ENCODE measurements at regions of chr1 and their contacts with region 1.

Region 1: DNA sequence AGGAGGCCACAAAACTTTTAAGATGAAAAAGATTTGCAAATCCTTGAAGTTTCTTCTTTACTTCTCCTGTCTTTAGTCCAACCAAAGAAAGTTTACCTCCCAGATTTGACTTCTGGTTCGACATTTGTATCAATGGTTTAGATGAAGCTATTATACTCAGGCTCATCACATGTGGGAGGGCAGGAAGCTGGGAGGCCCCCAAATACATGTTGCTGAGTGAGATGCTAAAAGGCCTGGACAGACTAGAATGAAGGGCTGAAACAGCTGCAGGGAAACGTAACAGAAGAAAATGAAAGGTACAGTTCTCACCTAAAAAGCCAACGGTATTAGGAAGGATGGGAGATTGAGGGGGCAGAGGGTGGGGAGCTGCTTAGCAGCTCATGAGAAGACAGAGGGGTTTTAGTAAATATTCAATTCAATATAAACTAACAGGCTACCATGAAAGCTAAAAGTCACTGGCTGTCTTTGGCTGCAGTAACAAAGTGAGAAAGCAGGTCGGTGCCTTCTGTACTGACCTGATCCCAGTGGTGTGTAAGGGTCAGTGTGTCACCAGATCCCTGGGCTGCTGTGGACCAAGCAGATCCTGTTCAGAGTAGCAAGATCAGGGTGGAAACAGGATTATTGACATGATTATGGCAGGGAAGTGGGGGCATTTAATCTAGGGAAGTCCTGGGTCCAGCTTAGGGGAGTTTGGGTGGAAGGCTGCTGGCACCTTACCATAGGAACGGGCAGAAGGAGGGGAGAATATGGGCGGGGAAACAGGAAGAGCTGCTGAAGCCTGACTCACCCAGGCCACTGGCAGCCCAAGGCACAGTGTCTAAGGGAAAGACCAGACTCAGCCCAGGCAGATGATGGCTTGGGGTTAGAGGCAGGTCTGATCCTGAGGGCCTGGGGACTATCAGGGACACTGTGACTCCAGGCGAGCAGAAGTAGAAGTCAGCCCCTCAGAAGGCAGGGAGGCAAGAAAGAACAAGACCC is 60.4 kb downstream of the KCNN3 start:
- DNase-seq: no peak
- ATAC-seq: peak; percentile 21
- H3K4me3 ChIP-seq: no peak overlapping the region
- H3K27ac ChIP-seq: peak overlapping the region; percentile 51
- H3K4me1 ChIP-seq: peaks cover 49% of the 10 kb centered on the region
- H3K27me3 ChIP-seq: no peaks in the 10 kb centered on the region
- CTCF ChIP-seq: no peak
- EP300 ChIP-seq: no peak
- POLR2A ChIP-seq: no peak
- RAD21 ChIP-seq: no peak

Region 2: DNA sequence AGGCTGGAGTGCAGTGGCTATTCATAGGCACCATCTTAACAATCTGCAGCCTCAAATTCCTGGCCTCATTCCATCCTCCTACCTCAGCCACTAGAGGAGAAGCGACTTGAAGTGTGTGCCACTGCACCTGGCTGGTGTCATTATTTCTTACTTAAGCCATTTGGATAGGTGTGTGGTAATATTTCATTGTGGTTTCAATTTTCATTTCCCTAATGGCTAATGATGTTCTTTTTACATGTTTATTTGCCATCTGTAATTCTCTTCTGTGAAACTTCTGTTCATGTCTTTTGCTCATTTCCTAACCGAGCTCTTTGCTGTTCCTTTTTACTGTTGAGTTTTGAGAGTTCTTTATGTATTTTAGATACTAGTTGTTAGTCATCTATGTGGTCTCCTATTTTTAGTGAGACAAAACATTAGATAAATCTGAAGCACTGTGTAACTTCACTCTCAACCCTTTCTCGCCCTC is 967.7 kb before region 1 on chr1:
- CTCF ChIA-PET with region 1: no interaction called
- POLR2A ChIA-PET with region 1: no interaction called
- RAD21 ChIA-PET with region 1: no interaction called
- SMC1A ChIA-PET with region 1: no interaction called
- in situ Hi-C with region 1: no loop called
- intact Hi-C with region 1: no loop called
- DNase-seq: peak; percentile 82
- ATAC-seq: peak; percentile 86
- H3K4me3 ChIP-seq: no peak overlapping the region
- H3K27ac ChIP-seq: peak overlapping the region; percentile 72
- H3K4me1 ChIP-seq: peaks cover 28% of the 10 kb centered on the region
- H3K27me3 ChIP-seq: no peaks in the 10 kb centered on the region
- CTCF ChIP-seq: no peak
- EP300 ChIP-seq: peak in 1 of 2 experiments; percentile 59; a peak in 1 of 4 replicates
- POLR2A ChIP-seq: no peak
- RAD21 ChIP-seq: no peak

Region 3: DNA sequence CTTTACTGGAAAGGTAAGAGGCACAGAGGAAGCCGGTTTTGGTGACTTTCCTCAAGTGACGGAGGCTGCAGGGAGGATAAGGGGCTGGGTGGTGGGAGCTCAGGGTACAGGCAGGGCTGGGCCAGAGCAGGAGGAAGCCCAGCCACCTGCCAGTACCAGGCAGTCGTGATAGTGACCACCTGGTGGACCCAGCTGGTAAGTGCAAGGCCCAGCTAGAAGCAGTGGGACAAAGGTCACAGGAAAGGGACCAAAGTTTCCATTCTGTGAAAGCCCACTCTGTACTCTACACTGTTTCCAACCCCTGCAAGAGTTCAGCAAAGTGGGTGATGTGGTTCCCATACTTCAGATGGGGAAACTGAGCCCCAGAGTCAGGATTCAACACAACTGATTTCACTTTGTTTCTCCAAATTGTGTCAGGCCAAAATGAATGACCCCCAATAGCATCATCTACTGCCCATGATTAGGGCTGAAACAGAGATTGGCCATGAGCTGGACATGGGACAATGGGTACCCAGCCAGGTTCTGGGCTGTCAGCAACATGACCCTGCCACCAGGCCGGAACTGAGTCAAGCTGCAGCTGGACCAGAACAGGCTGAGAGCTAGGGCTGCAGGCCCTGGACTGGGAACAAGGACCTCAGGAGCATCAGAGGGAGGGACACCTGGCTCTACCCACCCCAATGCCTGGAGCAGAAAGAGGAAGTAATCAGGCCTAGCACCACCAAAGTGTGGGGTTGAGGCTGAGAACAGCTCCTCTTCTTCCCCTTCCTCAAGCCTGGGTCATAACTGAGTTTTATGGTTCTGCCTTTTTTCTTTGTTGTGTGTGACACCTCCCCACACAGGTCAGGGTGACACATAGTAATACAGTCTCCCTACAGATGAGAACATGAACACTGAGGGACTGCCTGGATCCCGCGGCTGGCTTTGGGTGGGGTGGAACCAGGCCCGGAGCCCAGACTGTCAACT is 10.2 kb after region 1 on chr1:
- CTCF ChIA-PET with region 1: interaction called, 9 read pairs
- POLR2A ChIA-PET with region 1: interaction called, 5 read pairs
- RAD21 ChIA-PET with region 1: interaction called, 12 read pairs
- SMC1A ChIA-PET with region 1: interaction called, 36 read pairs
- in situ Hi-C with region 1: no loop called
- intact Hi-C with region 1: no loop called
- DNase-seq: no peak
- ATAC-seq: peak; percentile 83
- H3K4me3 ChIP-seq: no peak overlapping the region
- H3K27ac ChIP-seq: peak overlapping the region; percentile 10; the same call in 1 of the 2 replicates
- H3K4me1 ChIP-seq: peaks cover 35% of the 10 kb centered on the region
- H3K27me3 ChIP-seq: no peaks in the 10 kb centered on the region
- CTCF ChIP-seq: peak; percentile 11 to 59 (median 48)
- EP300 ChIP-seq: no peak
- POLR2A ChIP-seq: no peak
- RAD21 ChIP-seq: peak; percentile 47

Region 4: DNA sequence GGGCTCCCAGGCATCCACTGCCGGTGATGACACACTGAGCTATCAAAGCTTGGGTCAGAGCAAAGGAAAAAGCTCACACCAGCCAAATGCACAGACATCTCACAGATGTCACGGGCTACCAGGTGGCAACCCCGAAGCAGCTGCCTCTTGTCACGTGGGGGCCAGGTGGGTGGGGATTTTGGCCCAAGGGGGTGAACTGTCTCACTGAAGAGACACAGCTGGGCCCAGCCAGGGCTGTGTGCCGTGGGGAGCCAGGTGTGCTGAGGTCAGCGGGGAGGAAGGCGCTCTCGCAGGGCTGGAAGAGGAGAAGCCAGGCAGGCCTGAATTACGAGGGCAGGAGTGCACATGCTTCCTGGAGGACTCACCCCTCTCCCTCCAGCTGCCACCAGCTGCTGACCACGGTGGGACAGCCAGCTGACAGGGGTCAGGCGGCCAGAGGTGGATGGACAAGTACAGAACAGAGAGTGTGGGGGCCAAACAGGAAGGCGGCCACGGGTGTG is 28.0 kb after region 1 on chr1:
- CTCF ChIA-PET with region 1: interaction called, 6 read pairs
- POLR2A ChIA-PET with region 1: interaction called, 5 read pairs
- RAD21 ChIA-PET with region 1: interaction called, 8 read pairs
- SMC1A ChIA-PET with region 1: interaction called, 11 read pairs
- in situ Hi-C with region 1: no loop called
- intact Hi-C with region 1: no loop called
- DNase-seq: no peak
- ATAC-seq: peak; percentile 84
- H3K4me3 ChIP-seq: no peak overlapping the region
- H3K27ac ChIP-seq: no peak overlapping the region
- H3K4me1 ChIP-seq: peaks cover 33% of the 10 kb centered on the region
- H3K27me3 ChIP-seq: no peaks in the 10 kb centered on the region
- CTCF ChIP-seq: no peak
- EP300 ChIP-seq: peak in 1 of 2 experiments; percentile 73; a peak in 2 of 4 replicates
- POLR2A ChIP-seq: peak; percentile 47; the same call in 1 of the 2 replicates
- RAD21 ChIP-seq: no peak

Region 5: GRCh38 chr1:154847891-154848290 is 38.2 kb after region 1 on chr1:
- CTCF ChIA-PET with region 1: interaction called, 6 read pairs
- POLR2A ChIA-PET with region 1: interaction called, 5 read pairs
- RAD21 ChIA-PET with region 1: interaction called, 13 read pairs
- SMC1A ChIA-PET with region 1: interaction called, 8 read pairs
- in situ Hi-C with region 1: no loop called
- intact Hi-C with region 1: no loop called
- DNase-seq: no peak
- ATAC-seq: no peak
- H3K4me3 ChIP-seq: no peak overlapping the region
- H3K27ac ChIP-seq: no peak overlapping the region
- H3K4me1 ChIP-seq: peaks cover 52% of the 10 kb centered on the region
- H3K27me3 ChIP-seq: no peaks in the 10 kb centered on the region
- CTCF ChIP-seq: no peak
- EP300 ChIP-seq: no peak
- POLR2A ChIP-seq: no peak
- RAD21 ChIP-seq: no peak

Region 6: GRCh38 chr1:154856049-154856448 is 46.3 kb after region 1 on chr1:
- CTCF ChIA-PET with region 1: interaction called, 7 read pairs
- POLR2A ChIA-PET with region 1: interaction called, 6 read pairs
- RAD21 ChIA-PET with region 1: interaction called, 16 read pairs
- SMC1A ChIA-PET with region 1: interaction called, 32 read pairs
- in situ Hi-C with region 1: no loop called
- intact Hi-C with region 1: loop called (anchors 1 kb)
- DNase-seq: no peak
- ATAC-seq: no peak
- H3K4me3 ChIP-seq: peak overlapping the region; percentile 84; the same call in 1 of the 2 replicates
- H3K27ac ChIP-seq: peak overlapping the region; percentile 79; the same call in 1 of the 2 replicates
- H3K4me1 ChIP-seq: peaks cover 40% of the 10 kb centered on the region
- H3K27me3 ChIP-seq: no peaks in the 10 kb centered on the region
- CTCF ChIP-seq: no peak; a peak in 1 of 6 replicates
- EP300 ChIP-seq: no peak
- POLR2A ChIP-seq: no peak
- RAD21 ChIP-seq: 0 out of 2 replicates have a peak, but pooled peaks have one; percentile 17

Measured in GM12878 (cell line).